Caco-2 (cell line): ENCODE measurements at regions of chr6 and their contacts with region 1.

Region 1: DNA sequence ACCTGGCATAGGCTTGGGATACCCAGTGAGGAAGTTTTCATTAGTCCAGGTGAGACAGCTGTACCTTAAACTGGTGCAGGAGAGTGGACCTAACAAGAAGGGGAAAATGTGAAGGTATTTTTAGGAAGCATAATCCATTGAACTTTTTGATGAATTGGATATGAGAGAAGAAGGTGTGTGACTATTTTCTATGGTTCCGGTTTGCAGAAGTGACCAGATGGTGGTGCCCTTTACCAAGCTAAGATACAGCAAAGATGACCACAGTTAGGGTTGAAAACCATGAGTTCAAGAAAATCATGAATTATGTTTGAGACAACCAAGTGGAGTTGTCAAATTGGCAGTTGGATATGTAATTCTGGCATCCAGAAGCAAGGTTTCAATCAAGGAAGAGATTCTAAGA is 61.9 kb upstream of the NRSN1 start:
- DNase-seq: peak; percentile 39 to 58
- H3K4me3 ChIP-seq: no peak overlapping the region
- H3K4me3 Mint-ChIP-seq: no peak overlapping the region
- H3K27ac Mint-ChIP-seq: no peak overlapping the region
- H3K4me1 ChIP-seq: no peaks in the 10 kb centered on the region
- H3K4me1 Mint-ChIP-seq: peaks cover 10% of the 10 kb centered on the region
- H3K27me3 ChIP-seq: no peaks in the 10 kb centered on the region
- H3K27me3 Mint-ChIP-seq: no peaks in the 10 kb centered on the region
- CTCF ChIP-seq: peak; percentile 53 to 63

Region 2: GRCh38 chr6:22917344-22917743 is 1146.7 kb before region 1 on chr6:
- CTCF ChIA-PET with region 1: no interaction called
- POLR2A ChIA-PET with region 1: no interaction called
- intact Hi-C with region 1: no loop called
- DNase-seq: no peak
- H3K4me3 ChIP-seq: peak overlapping the region; percentile 28
- H3K4me3 Mint-ChIP-seq: peak overlapping the region; percentile 84
- H3K27ac Mint-ChIP-seq: peak overlapping the region; percentile 34
- H3K4me1 ChIP-seq: peaks cover 10% of the 10 kb centered on the region
- H3K4me1 Mint-ChIP-seq: peaks cover 21% of the 10 kb centered on the region
- H3K27me3 ChIP-seq: no peaks in the 10 kb centered on the region
- H3K27me3 Mint-ChIP-seq: no peaks in the 10 kb centered on the region
- CTCF ChIP-seq: no peak

Region 3: DNA sequence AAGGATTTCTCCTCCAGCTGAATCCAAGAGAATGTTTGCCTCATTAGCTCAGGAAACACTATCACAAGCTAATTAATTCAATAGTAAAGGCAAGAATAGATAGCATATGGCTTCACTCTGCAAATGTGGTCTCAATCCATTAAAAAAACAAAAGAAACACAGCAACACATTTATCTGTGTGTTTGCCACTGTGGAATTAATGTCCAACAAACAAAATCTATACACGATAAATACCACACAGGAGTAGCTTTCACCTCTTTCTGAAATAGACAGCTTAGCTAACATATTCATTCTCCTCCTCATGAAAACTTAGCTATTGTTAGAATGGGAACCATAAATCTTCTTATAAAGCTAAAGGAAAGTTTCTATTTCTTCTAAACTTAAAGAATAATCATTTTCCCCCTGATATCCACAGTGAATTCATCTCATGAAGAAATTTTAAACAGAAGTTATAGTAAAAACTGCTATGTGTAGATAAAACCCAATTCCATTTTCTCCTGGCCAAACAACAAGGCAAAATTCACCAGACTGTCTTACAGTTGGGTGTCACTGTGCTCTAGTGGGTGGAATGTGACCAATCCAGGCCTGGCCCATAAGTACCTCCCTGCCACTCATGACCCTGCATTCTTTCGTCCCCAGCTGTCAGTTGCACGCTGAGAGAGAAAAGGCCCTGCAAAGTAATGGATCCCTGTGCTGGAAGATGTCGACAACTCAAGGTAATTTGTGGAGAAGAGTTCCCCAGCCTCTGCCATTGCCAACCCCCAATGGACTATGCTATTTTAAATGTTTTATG is 31.0 kb before region 1 on chr6:
- CTCF ChIA-PET with region 1: no interaction called
- POLR2A ChIA-PET with region 1: no interaction called
- intact Hi-C with region 1: no loop called
- DNase-seq: peak; percentile 33 to 52
- H3K4me3 ChIP-seq: no peak overlapping the region
- H3K4me3 Mint-ChIP-seq: no peak overlapping the region
- H3K27ac Mint-ChIP-seq: no peak overlapping the region
- H3K4me1 ChIP-seq: 0 out of 2 replicates have a peak, but pooled peaks cover 4% of the 10 kb centered on the region
- H3K4me1 Mint-ChIP-seq: no peaks in the 10 kb centered on the region
- H3K27me3 ChIP-seq: no peaks in the 10 kb centered on the region
- H3K27me3 Mint-ChIP-seq: peaks cover 14% of the 10 kb centered on the region
- CTCF ChIP-seq: no peak

Region 4: DNA sequence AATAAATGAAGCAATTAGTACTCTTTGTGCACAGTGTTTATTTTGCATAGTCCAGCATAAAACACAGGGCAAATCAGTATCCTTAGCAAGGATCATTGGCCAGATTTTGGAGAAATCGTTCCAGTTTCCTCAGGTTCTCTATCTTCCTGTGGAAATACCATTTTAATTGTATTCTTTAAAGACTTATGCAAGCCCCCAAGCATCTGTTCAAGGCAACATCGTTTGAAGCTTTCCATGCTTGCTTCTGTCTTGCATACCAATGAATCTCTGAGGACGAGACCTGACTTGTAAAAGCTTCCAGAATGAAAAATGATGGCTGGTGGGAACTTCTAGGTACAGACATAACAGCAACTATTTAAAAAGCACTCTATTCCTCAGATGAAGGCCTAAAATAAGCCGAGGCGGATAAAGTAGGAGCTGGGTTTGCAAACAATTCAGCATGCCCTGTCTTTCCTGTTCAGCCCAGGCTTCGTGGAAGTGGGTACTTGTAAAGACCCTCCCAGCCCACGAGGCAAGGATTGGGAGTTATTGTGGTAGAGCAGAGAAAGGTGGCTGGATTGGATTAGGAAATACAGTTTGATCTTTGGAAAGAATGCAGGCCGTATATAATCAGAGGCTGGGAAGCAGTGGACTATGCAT is 83.5 kb after region 1 on chr6:
- CTCF ChIA-PET with region 1: no interaction called
- POLR2A ChIA-PET with region 1: no interaction called
- intact Hi-C with region 1: loop called (anchors 2 kb)
- DNase-seq: no peak
- H3K4me3 ChIP-seq: no peak overlapping the region
- H3K4me3 Mint-ChIP-seq: peak overlapping the region; percentile 65
- H3K27ac Mint-ChIP-seq: peak overlapping the region; percentile 95
- H3K4me1 ChIP-seq: peaks cover 40% of the 10 kb centered on the region
- H3K4me1 Mint-ChIP-seq: peaks cover 49% of the 10 kb centered on the region
- H3K27me3 ChIP-seq: no peaks in the 10 kb centered on the region
- H3K27me3 Mint-ChIP-seq: no peaks in the 10 kb centered on the region
- CTCF ChIP-seq: no peak

Region 5: GRCh38 chr6:24205020-24205492 is 141.0 kb after region 1 on chr6:
- CTCF ChIA-PET with region 1: no interaction called
- POLR2A ChIA-PET with region 1: no interaction called
- intact Hi-C with region 1: loop called (anchors 1 kb)
- DNase-seq: peak in 1 of 2 experiments; percentile 32
- H3K4me3 ChIP-seq: no peak overlapping the region
- H3K4me3 Mint-ChIP-seq: no peak overlapping the region
- H3K27ac Mint-ChIP-seq: no peak overlapping the region
- H3K4me1 ChIP-seq: peaks cover 18% of the 10 kb centered on the region
- H3K4me1 Mint-ChIP-seq: peaks cover 50% of the 10 kb centered on the region
- H3K27me3 ChIP-seq: no peaks in the 10 kb centered on the region
- H3K27me3 Mint-ChIP-seq: no peaks in the 10 kb centered on the region
- CTCF ChIP-seq: peak; percentile 46 to 75

Region 6: DNA sequence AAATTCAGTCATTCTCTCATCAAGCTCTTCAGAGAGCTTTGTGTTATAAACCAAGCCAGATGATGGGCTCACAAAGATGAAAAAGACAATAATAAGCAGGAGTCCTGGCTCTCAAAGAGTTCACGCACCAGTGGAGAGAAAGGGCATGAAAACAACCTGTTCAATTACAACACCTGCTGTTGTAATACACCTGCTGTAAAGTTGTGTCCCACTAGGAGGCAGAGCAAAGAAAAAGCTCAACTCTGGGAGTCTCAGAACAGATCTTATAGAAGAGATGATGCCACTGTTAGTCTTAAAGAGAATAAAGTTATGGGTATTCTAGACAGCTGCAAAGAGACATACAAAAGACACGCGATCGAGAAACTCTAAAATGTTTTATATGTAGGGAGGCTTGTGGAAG is 193.2 kb after region 1 on chr6:
- CTCF ChIA-PET with region 1: no interaction called
- POLR2A ChIA-PET with region 1: no interaction called
- intact Hi-C with region 1: loop called (anchors 1 kb)
- DNase-seq: peak in 1 of 2 experiments; percentile 43
- H3K4me3 ChIP-seq: no peak overlapping the region
- H3K4me3 Mint-ChIP-seq: no peak overlapping the region
- H3K27ac Mint-ChIP-seq: peak overlapping the region; percentile 6
- H3K4me1 ChIP-seq: no peaks in the 10 kb centered on the region
- H3K4me1 Mint-ChIP-seq: peaks cover 20% of the 10 kb centered on the region
- H3K27me3 ChIP-seq: no peaks in the 10 kb centered on the region
- H3K27me3 Mint-ChIP-seq: no peaks in the 10 kb centered on the region
- CTCF ChIP-seq: peak; percentile 18 to 29

Region 7: GRCh38 chr6:24274441-24275083 is 210.5 kb after region 1 on chr6:
- CTCF ChIA-PET with region 1: no interaction called
- POLR2A ChIA-PET with region 1: no interaction called
- intact Hi-C with region 1: loop called (anchors 1 kb)
- DNase-seq: no peak
- H3K4me3 ChIP-seq: no peak overlapping the region
- H3K4me3 Mint-ChIP-seq: no peak overlapping the region
- H3K27ac Mint-ChIP-seq: no peak overlapping the region
- H3K4me1 ChIP-seq: peaks cover 26% of the 10 kb centered on the region
- H3K4me1 Mint-ChIP-seq: peaks cover 25% of the 10 kb centered on the region
- H3K27me3 ChIP-seq: no peaks in the 10 kb centered on the region
- H3K27me3 Mint-ChIP-seq: no peaks in the 10 kb centered on the region
- CTCF ChIP-seq: peak; percentile 35 to 62

Region 8: GRCh38 chr6:24385536-24386269 is 321.6 kb after region 1 on chr6:
- CTCF ChIA-PET with region 1: no interaction called
- POLR2A ChIA-PET with region 1: no interaction called
- intact Hi-C with region 1: loop called (anchors 1 kb)
- DNase-seq: peak in 1 of 2 experiments; percentile 29
- H3K4me3 ChIP-seq: no peak overlapping the region
- H3K4me3 Mint-ChIP-seq: no peak overlapping the region
- H3K27ac Mint-ChIP-seq: no peak overlapping the region
- H3K4me1 ChIP-seq: peaks cover 21% of the 10 kb centered on the region
- H3K4me1 Mint-ChIP-seq: peaks cover 28% of the 10 kb centered on the region
- H3K27me3 ChIP-seq: no peaks in the 10 kb centered on the region
- H3K27me3 Mint-ChIP-seq: no peaks in the 10 kb centered on the region
- CTCF ChIP-seq: no peak

Region 9: DNA sequence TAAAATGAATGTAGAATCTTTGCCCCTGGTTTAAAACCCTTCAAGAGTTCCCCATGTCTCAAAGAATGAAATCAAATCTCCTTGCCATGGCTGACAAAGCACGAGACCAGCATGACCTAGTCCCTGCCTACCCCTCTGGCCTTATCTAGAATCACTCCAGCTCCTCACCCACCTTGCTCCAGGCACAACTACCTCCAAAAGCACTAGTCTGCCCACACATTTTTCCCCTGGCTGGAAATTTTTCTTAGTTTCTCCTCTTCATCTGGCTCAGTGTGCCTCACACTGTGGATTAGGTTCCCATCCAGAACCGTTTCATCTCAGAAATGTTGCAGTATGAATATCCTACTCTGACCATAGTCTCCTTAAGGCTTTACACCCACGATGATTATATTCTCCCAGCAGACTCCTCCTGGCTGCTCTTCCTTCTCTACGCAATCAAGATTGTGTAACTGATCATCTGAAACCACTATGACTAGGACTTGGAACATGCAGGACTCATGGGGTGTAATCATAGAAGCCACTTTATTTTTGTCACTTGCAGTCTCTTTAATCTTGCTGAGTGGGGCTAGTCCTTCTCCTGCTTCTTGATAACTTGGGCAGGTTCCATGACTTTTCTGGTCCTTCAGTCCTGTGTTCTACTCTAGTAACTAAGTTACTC is 330.8 kb after region 1 on chr6:
- CTCF ChIA-PET with region 1: no interaction called
- POLR2A ChIA-PET with region 1: no interaction called
- intact Hi-C with region 1: loop called (anchors 1 kb)
- DNase-seq: no peak
- H3K4me3 ChIP-seq: no peak overlapping the region
- H3K4me3 Mint-ChIP-seq: no peak overlapping the region
- H3K27ac Mint-ChIP-seq: no peak overlapping the region
- H3K4me1 ChIP-seq: peaks cover 7% of the 10 kb centered on the region
- H3K4me1 Mint-ChIP-seq: peaks cover 14% of the 10 kb centered on the region
- H3K27me3 ChIP-seq: no peaks in the 10 kb centered on the region
- H3K27me3 Mint-ChIP-seq: no peaks in the 10 kb centered on the region
- CTCF ChIP-seq: no peak